Activated naive CD4-positive, alpha-beta T cell treated with anti-CD3 and anti-CD28 coated beads for 36 hours (primary cell): ENCODE measurements at regions of chr2 and their contacts with region 1.

Region 1: DNA sequence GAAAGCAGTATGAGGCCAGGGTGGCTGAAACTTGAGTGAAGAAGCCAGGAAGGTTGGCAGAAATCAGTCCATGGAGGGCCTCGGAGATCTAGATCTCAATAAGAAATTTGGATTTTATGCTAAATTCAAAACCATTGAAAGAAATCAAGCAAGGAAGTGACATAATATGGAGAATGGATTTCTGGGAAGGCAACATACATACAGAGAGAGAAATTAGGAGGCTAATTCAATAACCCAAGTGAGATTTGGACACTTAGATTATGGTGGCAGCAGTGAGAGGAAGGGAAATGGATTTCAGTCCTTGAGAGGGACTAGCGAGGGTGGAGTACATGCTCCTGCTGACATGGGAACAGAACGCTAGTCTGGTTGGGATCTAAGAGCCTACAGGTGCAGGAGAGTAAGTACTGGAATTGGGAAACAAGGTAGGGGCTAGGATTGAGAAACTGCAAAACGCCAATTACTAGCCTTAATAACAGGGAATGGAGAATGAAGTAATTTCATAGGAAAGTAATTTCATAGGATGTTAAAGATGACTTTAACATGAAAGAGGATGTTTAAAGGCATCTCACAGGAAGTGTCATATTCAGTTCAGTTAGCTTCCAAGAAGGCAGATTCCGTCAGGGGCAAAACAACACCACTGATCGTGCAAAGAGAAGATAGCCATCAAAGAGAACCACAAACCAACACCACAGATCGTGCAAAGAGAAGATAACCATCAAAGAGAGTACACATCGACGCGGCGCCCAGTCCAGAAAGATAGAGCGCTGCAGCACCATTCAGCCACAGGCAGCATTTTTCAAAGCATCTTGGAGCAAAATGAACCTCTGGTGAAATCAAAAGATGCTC is 27.2 kb downstream of the CDKL4 start:
- DNase-seq: peak; percentile 64
- H3K4me3 Mint-ChIP-seq: peak overlapping the region; percentile 57
- H3K27ac Mint-ChIP-seq: peak overlapping the region; percentile 87
- H3K4me1 Mint-ChIP-seq: peaks cover 36% of the 10 kb centered on the region
- H3K27me3 Mint-ChIP-seq: no peaks in the 10 kb centered on the region

Region 2: GRCh38 chr2:38778687-38779082 is 437.9 kb before region 1 on chr2:
- CTCF ChIA-PET with region 1: no interaction called
- intact Hi-C with region 1: no loop called
- DNase-seq: no peak
- H3K4me3 Mint-ChIP-seq: peak overlapping the region; percentile 95
- H3K27ac Mint-ChIP-seq: peak overlapping the region; percentile 89
- H3K4me1 Mint-ChIP-seq: peaks cover 11% of the 10 kb centered on the region
- H3K27me3 Mint-ChIP-seq: peaks cover 10% of the 10 kb centered on the region

Region 3: GRCh38 chr2:38922389-38922788 is 294.2 kb before region 1 on chr2:
- CTCF ChIA-PET with region 1: no interaction called
- intact Hi-C with region 1: no loop called
- DNase-seq: no peak
- H3K4me3 Mint-ChIP-seq: no peak overlapping the region
- H3K27ac Mint-ChIP-seq: no peak overlapping the region
- H3K4me1 Mint-ChIP-seq: no peaks in the 10 kb centered on the region
- H3K27me3 Mint-ChIP-seq: no peaks in the 10 kb centered on the region

Region 4: DNA sequence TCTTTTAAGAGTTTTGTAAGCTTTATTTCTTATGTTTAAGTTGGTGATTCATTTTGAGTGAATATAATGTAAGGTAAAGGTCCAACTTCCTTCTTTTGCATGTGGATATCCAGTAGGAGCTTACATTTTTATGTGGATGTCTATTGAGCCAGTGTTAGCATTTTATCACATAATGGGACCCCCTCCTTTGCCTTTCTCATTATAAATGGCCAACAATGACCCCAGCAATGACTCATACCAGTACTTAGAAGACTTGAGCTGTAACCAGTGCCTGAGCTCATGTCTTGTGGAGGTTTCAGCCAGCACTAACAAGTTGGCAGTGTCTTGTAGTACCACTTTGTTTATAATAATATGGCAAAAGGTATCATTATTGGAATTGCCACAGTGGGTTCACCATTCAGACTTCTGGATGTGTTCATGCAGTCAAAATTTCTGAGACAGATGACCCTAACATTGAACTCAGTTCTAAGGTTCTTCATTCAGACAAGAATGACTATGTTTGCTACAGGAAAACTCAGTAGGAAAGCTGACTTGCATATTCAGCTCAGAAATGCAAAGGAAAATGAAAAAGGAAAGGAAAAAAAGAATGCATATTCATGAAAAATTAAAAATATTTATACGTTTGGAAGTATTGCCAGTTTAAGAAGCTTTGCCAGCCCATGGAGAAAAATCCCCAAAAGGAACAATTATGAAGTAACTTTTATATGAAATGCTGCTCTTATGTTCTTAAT is 13.8 kb before region 1 on chr2:
- CTCF ChIA-PET with region 1: interaction called, 3 read pairs
- intact Hi-C with region 1: loop called (anchors 1 kb)
- DNase-seq: no peak
- H3K4me3 Mint-ChIP-seq: no peak overlapping the region
- H3K27ac Mint-ChIP-seq: no peak overlapping the region
- H3K4me1 Mint-ChIP-seq: peaks cover 12% of the 10 kb centered on the region
- H3K27me3 Mint-ChIP-seq: no peaks in the 10 kb centered on the region